ENCODE measurements at regions of chr16 and their contacts with region 1.

Region 1: GRCh38 chr16:2595393-2596205 is 57.8 kb downstream of the PDPK1 start:
- DNase-seq: peak in 24 of 42 donors; percentile 7 to 74 (median 35)

Region 2: GRCh38 chr16:2531767-2532493 is 63.7 kb before region 1 on chr16:
- intact Hi-C with region 1: loop called (anchors 10 kb)
- DNase-seq: peak; percentile 95 to 99 (median 98)

Region 3: DNA sequence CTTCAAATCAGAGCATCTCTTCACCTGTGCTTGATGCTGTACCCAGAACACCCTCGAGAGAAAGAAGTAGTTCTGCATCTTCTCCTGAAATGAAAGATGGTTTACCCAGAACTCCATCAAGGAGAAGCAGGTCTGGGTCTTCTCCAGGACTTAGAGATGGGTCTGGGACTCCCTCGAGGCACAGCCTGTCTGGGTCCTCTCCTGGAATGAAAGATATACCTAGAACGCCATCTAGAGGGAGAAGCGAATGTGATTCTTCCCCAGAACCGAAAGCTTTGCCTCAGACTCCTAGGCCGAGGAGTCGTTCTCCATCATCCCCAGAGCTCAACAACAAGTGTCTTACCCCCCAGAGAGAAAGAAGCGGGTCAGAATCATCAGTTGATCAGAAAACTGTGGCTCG is 169.1 kb after region 1 on chr16:
- intact Hi-C with region 1: no loop called
- DNase-seq: no peak